ENCODE measurements at regions of chr10 and their contacts with region 1.

Region 1: DNA sequence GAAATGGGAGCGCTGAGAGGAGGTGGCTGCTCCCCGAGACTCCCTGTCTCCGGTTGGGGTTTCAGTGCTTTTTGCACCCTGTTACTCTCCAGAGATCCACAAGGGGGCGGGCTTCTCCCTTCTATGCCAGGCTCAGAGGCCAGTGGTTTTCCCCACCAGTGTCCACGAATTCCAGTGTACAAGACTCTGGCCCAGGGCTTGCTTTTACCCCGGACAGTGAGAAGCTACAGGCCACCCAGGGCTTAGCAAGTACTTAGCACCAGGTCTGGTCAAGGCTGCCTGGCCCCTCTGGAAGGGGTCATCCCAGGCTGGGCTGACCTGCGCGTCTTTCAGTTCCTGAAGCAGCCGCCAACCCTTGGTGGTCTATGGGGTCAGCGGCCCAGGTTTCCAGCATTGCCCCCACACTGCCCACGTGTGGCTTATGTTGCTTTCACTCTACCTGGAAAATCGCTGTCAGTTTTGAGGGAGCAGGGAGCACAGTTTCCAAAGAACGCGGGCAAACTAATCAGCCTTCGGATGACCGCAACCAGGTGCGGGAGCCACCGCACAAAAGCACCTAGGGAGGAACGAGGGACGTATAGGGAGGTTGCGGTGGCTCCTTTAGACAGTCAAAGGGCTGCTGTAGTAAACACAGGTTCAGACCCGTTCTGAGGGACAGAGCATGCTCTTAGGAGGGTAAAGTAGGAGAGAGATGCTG is 6.8 kb downstream of the CYP26A1 start:
- DNase-seq: no peak
- H3K4me3 ChIP-seq: no peak overlapping the region
- H3K27ac ChIP-seq: no peak overlapping the region
- H3K4me1 ChIP-seq: peaks cover 0 to 9% (median 8%) of the 10 kb centered on the region in 4 donors
- H3K27me3 ChIP-seq: peaks cover 0 to 5% of the 10 kb centered on the region in 2 donors
- CTCF ChIP-seq: peak; percentile 85 to 86

Region 2: GRCh38 chr10:93288654-93289634 is 208.4 kb after region 1 on chr10:
- intact Hi-C with region 1: loop called (anchors 5 kb)
- DNase-seq: peak; percentile 56 to 74
- H3K4me3 ChIP-seq: no peak overlapping the region
- H3K27ac ChIP-seq: no peak overlapping the region
- H3K4me1 ChIP-seq: peaks cover 0 to 4% (median 0%) of the 10 kb centered on the region in 4 donors
- H3K27me3 ChIP-seq: no peaks in the 10 kb centered on the region
- CTCF ChIP-seq: peak; percentile 77 to 85

Region 3: GRCh38 chr10:93352638-93353383 is 272.3 kb after region 1 on chr10:
- intact Hi-C with region 1: loop called (anchors 10 kb)
- DNase-seq: no peak
- H3K4me3 ChIP-seq: no peak overlapping the region
- H3K27ac ChIP-seq: peak overlapping the region; percentile 8 to 35
- H3K4me1 ChIP-seq: peaks cover 0 to 10% (median 1%) of the 10 kb centered on the region in 4 donors
- H3K27me3 ChIP-seq: no peaks in the 10 kb centered on the region
- CTCF ChIP-seq: peak; percentile 67 to 74